ENCODE measurements at regions of chr17 and their contacts with region 1.

Region 1: GRCh38 chr17:64496786-64497564 is at the start of gene POLG2:
- DNase-seq: peak; percentile 73 to 94
- H3K4me3 ChIP-seq: peak within 1 kb of the TSS; percentile 67 to 92 (median 80)
- H3K27ac ChIP-seq: peak within 1 kb of the TSS; percentile 85
- H3K4me1 ChIP-seq: peaks cover 0 to 7% (median 3%) of the 10 kb centered on the region in 4 experiments; a peak in 5 of 7 replicates
- H3K27me3 ChIP-seq: no peaks in the 10 kb centered on the region
- CTCF ChIP-seq: peak; percentile 33 to 65 (median 51); a peak in 3 of 4 replicates
- EP300 ChIP-seq: no peak
- POLR2A ChIP-seq: peak; percentile 55 to 87
- RAD21 ChIP-seq: peak; percentile 38 to 41; a peak in 3 of 4 replicates
- total RNA-seq, gene POLG2: 30.9 and 34.3 TPM in 2 replicates

Region 2: DNA sequence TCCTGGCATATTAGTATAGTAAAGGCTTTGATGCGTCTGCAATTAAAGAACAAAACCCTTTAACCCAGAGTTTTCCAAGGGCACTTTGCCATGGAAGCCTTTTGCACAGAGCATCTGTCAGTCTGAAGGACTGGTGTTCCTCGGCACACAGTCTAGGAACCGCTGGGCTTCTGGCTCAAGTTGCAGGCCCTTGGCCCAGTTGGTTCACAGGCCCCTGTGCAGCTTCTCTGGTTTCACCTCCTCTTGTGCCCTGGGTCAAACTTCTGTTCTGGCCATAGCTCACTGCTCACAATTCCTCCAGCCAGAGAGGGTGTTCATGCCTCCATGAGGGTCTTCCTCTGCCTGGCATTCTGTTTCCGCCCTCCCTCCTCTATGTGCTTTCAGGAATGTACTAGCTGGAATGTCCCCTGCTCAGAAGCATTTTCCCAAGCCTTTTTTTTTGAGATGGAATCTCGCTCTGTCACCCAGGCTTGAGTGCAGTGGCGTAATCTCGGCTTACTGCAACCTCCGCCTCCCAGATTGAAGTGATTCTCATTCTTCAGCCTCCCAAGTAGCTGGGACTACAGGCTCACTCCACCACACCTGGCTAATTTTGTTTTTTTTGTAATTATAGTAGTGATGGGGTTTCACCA is 199.4 kb before region 1 on chr17:
- CTCF ChIA-PET with region 1: no interaction called
- POLR2A ChIA-PET with region 1: no interaction called
- DNase-seq: no peak
- H3K4me3 ChIP-seq: no peak overlapping the region
- H3K27ac ChIP-seq: no peak overlapping the region
- H3K4me1 ChIP-seq: no peaks in the 10 kb centered on the region
- H3K27me3 ChIP-seq: no peaks in the 10 kb centered on the region
- CTCF ChIP-seq: no peak
- EP300 ChIP-seq: no peak
- POLR2A ChIP-seq: no peak
- RAD21 ChIP-seq: no peak

Region 3: DNA sequence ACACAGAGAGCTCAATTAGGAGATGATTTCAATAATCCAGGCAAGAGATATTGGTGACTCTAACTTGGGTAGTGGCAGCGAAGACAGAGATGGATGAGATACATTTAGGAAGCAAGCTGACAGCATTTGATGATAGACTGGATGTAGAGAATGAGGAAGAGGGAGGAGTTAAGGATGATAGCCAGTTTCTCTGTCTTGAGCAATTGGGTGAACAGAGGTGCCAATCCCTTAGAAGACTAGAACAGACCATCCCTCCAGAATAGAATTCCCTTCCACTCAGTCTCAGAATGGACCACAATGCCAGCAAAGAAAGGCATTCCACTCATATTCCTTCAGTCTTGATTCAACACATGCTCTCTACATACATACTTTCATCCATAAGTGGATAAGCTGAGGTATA is 17.3 kb before region 1 on chr17:
- CTCF ChIA-PET with region 1: interaction called, 14 read pairs
- POLR2A ChIA-PET with region 1: interaction called, 13 read pairs
- DNase-seq: no peak
- H3K4me3 ChIP-seq: no peak overlapping the region
- H3K27ac ChIP-seq: no peak overlapping the region
- H3K4me1 ChIP-seq: no peaks in the 10 kb centered on the region
- H3K27me3 ChIP-seq: no peaks in the 10 kb centered on the region
- CTCF ChIP-seq: no peak
- EP300 ChIP-seq: no peak
- POLR2A ChIP-seq: no peak
- RAD21 ChIP-seq: no peak

Region 4: DNA sequence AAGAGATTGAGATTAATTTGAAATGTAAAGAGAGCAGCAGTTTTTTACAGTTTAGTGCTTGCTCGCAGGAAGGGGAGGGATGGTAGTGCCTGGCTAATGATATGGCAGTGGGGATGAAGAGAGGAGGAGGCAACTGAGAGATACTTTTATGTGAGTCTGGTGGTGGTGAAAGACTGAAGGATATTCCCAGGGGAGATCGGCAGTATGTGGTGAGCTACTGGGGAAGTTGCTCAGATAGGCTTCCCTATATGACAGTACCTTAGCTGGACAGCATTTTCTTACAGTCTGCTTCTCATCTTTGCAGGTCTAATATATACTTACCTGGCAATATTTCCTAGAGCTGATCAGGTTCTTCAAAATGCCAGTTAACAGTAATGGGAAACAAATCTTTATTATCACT is 18.4 kb after region 1 on chr17:
- CTCF ChIA-PET with region 1: interaction called, 11 read pairs
- POLR2A ChIA-PET with region 1: interaction called, 26 read pairs
- DNase-seq: no peak
- H3K4me3 ChIP-seq: no peak overlapping the region
- H3K27ac ChIP-seq: no peak overlapping the region
- H3K4me1 ChIP-seq: peaks cover 0 to 2% (median under 1%) of the 10 kb centered on the region in 4 experiments; a peak in 4 of 7 replicates
- H3K27me3 ChIP-seq: no peaks in the 10 kb centered on the region
- CTCF ChIP-seq: no peak
- EP300 ChIP-seq: no peak
- POLR2A ChIP-seq: no peak
- RAD21 ChIP-seq: no peak

Region 5: GRCh38 chr17:64534175-64534574 is 37.2 kb after region 1 on chr17:
- CTCF ChIA-PET with region 1: no interaction called
- POLR2A ChIA-PET with region 1: interaction called, 56 read pairs
- DNase-seq: no peak
- H3K4me3 ChIP-seq: no peak overlapping the region
- H3K27ac ChIP-seq: no peak overlapping the region
- H3K4me1 ChIP-seq: no peaks in the 10 kb centered on the region
- H3K27me3 ChIP-seq: no peaks in the 10 kb centered on the region
- CTCF ChIP-seq: peak in 2 of 3 experiments; percentile 10 to 12; a peak in 2 of 4 replicates
- EP300 ChIP-seq: no peak
- POLR2A ChIP-seq: no peak
- RAD21 ChIP-seq: 0 out of 4 replicates have a peak, but pooled peaks of 1 of the 2 experiments have one; percentile 1

Region 6: DNA sequence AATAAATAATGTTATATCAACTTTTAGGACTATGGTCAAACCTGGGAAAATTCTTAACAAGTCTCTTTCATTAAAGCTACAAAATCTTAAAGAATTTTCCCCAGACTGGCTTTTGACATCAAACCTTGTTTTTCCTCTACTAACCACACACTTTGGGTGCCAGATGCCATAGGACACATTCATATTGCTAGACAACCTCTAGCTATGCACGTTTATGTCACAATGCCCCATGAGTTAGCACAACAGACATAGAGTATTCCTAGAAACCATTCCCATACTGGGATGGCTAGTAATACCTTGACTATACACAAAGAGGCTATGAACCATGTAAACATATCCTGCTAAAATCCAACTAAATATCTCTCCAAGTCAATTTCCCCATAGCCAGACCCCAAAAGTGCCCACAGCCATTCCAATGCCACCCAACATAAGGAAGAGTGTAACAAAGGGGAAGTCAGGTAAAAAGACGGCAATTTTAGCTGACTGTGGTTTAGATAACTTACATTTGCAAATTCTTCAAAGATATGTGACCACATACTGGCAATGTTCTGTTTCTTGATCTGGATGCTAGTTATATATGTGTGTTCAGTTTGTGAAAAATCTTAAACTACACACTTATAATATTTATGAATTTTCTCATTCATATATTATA is 141.7 kb after region 1 on chr17:
- CTCF ChIA-PET with region 1: no interaction called
- POLR2A ChIA-PET with region 1: no interaction called
- DNase-seq: no peak
- H3K4me3 ChIP-seq: no peak overlapping the region
- H3K27ac ChIP-seq: no peak overlapping the region
- H3K4me1 ChIP-seq: no peaks in the 10 kb centered on the region
- H3K27me3 ChIP-seq: no peaks in the 10 kb centered on the region
- CTCF ChIP-seq: no peak
- EP300 ChIP-seq: no peak
- POLR2A ChIP-seq: no peak
- RAD21 ChIP-seq: no peak

Region 7: DNA sequence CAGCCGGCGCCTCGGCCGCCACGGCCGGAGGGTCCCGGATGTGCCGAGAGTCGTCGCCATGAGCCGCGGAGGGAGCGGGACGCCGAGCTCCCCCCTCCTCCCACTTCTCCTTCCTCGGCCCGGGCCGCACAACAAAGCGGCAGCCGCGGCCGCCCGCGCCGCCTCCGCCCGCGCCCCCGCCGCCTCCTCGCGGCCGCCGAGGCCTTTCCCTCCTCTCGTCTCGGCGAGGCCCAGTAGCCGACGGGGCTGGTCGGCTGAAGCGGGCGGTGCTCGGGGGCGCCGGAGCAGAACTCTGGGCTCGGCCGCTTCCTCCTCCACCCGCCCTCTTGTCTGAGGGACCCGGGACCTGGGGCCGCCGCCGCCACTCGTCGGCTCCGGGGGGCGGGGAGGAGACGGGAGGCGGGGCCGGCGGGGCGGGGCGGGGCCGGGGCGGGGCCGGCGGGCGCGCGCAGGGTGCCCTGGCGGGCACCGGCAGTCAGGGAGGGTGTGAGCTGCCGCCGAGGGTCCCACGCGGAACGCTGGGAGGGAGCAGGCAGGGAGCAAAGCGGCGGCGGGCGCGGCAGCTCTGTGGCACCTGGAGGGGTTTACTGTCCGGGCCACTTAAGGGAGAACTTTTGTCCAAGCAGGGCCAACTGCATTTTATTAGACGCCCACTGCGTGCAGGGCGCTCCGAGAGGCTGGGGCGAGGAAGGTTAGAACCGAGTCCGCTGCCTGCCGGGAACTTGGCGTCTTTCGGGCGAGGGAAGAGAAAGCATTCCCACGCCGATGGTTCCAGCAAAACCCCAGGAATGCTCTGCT is 165.2 kb after region 1 on chr17 and contains the start of gene SMURF2:
- CTCF ChIA-PET with region 1: no interaction called
- POLR2A ChIA-PET with region 1: interaction called, 13 read pairs
- DNase-seq: peak; percentile 17 to 83
- H3K4me3 ChIP-seq: peak within 1 kb of the TSS; percentile 78 to 84 (median 80)
- H3K27ac ChIP-seq: peak within 1 kb of the TSS; percentile 90; the same call in 1 of the 2 replicates
- H3K4me1 ChIP-seq: peaks cover 0 to 3% (median under 1%) of the 10 kb centered on the region in 4 experiments; a peak in 5 of 7 replicates
- H3K27me3 ChIP-seq: no peaks in the 10 kb centered on the region
- CTCF ChIP-seq: no peak
- EP300 ChIP-seq: no peak
- POLR2A ChIP-seq: peak; percentile 78 to 91
- RAD21 ChIP-seq: no peak
- total RNA-seq, gene SMURF2: 27.7 and 29.2 TPM in 2 replicates

Measured in H1 (cell line).